HCT116 (cell line): ENCODE measurements at regions of chr1 and their contacts with region 1.

Region 1: GRCh38 chr1:152347116-152347728 is 12.6 kb downstream of the FLG2 start:
- DNase-seq: peak; percentile 61
- ATAC-seq: peak; percentile 81
- H3K4me3 ChIP-seq: no peak overlapping the region
- H3K27ac ChIP-seq: no peak overlapping the region
- H3K4me1 ChIP-seq: no peaks in the 10 kb centered on the region
- H3K27me3 ChIP-seq: peaks cover 23% of the 10 kb centered on the region
- CTCF ChIP-seq: peak; percentile 54 to 90 (median 81); a peak in 5 of 6 replicates
- POLR2A ChIP-seq: no peak
- RAD21 ChIP-seq: peak; percentile 57

Region 2: DNA sequence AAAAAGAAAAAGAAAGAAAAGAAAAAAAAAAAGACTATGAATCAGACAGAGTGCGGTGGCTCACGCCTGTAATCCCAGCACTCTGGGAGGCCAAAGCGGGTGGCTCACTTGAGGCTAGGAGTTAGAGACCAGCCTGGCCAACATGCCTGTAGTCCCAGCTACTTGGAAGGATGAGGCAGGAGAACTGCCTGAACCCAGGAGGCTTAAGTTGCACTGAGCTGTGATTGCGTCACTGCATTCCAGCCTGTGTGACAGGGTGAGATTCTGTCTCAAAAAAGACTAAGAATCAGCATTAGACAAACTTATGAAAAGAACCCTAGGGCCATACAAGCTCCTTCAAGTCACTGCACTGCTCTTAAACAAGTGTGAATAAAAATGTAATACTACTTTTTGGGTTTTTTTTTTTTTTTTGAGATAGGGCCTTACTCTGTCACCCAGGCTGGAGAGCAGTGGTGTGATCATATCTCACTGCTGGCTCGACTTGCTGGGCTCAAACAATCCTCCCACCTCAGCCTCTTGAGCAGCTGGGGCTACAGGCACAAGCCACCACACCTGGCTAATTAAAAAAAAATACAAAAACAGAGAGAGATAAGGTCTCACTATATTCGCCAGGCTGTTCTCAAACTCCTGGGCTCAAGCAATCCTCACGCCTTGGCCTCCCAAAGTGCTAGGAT is 930.9 kb before region 1 on chr1:
- CTCF ChIA-PET with region 1: no interaction called
- POLR2A ChIA-PET with region 1: no interaction called
- RAD21 ChIA-PET with region 1: no interaction called
- intact Hi-C with region 1: no loop called
- DNase-seq: no peak
- ATAC-seq: no peak
- H3K4me3 ChIP-seq: no peak overlapping the region
- H3K27ac ChIP-seq: no peak overlapping the region
- H3K4me1 ChIP-seq: no peaks in the 10 kb centered on the region
- H3K27me3 ChIP-seq: no peaks in the 10 kb centered on the region
- CTCF ChIP-seq: no peak
- POLR2A ChIP-seq: no peak
- RAD21 ChIP-seq: no peak

Region 3: DNA sequence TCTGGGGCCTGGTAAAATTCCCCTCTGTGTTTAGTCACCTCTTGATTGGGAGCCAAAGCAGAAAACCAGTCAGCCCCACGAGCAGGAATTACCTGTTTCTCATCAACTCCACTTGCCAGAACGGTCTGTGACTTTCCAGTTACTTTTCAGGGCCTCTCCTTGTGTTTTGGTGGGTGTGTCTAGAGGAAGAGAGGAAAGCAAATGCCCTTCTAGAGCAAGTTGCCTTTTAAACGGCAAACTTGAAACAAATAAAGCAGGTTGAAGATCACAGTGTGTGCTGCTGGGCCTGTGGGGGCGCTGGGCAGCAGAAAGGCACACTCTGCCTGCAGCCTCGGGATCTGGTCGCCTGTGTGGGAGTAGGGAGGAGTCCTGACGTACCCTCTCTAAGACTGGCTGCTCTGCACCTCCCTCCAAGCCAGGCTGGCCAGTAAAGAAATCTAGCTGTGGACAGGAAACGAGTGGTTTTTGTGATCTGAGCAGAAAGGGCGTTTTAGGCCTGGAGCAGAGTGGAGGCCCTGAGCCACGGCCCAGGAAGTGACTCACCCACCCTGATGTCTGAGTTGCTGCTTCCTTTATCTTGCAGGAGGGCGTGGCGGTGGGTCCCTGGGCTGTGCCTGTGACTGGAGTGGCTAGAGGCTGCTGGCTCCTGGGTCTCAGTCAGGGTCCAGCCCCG is 299.4 kb before region 1 on chr1:
- CTCF ChIA-PET with region 1: no interaction called
- POLR2A ChIA-PET with region 1: no interaction called
- RAD21 ChIA-PET with region 1: no interaction called
- intact Hi-C with region 1: loop called (anchors 2 kb)
- DNase-seq: peak; percentile 99
- ATAC-seq: peak; percentile 88
- H3K4me3 ChIP-seq: peak overlapping the region; percentile 45 to 48
- H3K27ac ChIP-seq: peak overlapping the region; percentile 98
- H3K4me1 ChIP-seq: peaks cover 29 to 61% of the 10 kb centered on the region in 2 experiments
- H3K27me3 ChIP-seq: no peaks in the 10 kb centered on the region
- CTCF ChIP-seq: peak; percentile 4 to 67 (median 55); a peak in 4 of 6 replicates
- POLR2A ChIP-seq: peak; percentile 86
- RAD21 ChIP-seq: peak; percentile 17; the same call in 1 of the 2 replicates

Region 4: GRCh38 chr1:152118915-152119314 is 228.3 kb before region 1 on chr1:
- CTCF ChIA-PET with region 1: no interaction called
- POLR2A ChIA-PET with region 1: no interaction called
- RAD21 ChIA-PET with region 1: no interaction called
- intact Hi-C with region 1: no loop called
- DNase-seq: no peak
- ATAC-seq: no peak
- H3K4me3 ChIP-seq: no peak overlapping the region
- H3K27ac ChIP-seq: no peak overlapping the region
- H3K4me1 ChIP-seq: no peaks in the 10 kb centered on the region
- H3K27me3 ChIP-seq: peaks cover 56% of the 10 kb centered on the region
- CTCF ChIP-seq: no peak
- POLR2A ChIP-seq: no peak
- RAD21 ChIP-seq: no peak

Region 5: DNA sequence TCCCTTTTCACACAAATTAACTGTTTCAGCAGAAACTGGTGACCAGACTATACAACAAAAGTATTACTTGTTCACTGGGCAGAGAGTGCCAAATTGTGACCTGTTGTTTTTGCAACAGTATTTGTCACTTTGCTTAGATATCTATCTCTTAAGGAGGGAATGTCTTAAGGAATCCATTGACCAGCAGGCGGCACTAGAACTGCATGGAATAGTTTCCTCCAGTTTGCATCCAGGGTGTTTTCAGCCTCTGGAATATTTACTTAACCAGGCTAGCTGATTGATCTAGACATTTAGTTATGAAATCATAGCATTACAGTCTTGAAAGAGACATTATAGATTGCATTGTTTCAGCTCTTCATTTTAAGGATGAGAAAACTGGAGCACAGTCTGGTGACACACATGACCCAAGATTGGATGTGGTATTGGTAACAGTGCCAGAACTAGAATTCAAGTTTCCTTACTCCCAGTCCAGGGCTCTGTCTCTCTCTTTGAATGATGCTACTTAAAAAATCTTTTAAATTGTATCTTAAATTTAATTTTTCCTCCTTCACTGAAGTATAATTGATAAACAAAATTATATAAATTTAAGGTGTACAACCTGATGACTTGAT is 205.1 kb before region 1 on chr1:
- CTCF ChIA-PET with region 1: no interaction called
- POLR2A ChIA-PET with region 1: no interaction called
- RAD21 ChIA-PET with region 1: no interaction called
- intact Hi-C with region 1: loop called (anchors 2 kb)
- DNase-seq: peak; percentile 63
- ATAC-seq: peak; percentile 91
- H3K4me3 ChIP-seq: no peak overlapping the region
- H3K27ac ChIP-seq: no peak overlapping the region
- H3K4me1 ChIP-seq: no peaks in the 10 kb centered on the region
- H3K27me3 ChIP-seq: peaks cover 26% of the 10 kb centered on the region
- CTCF ChIP-seq: peak; percentile 80 to 94 (median 93)
- POLR2A ChIP-seq: no peak
- RAD21 ChIP-seq: peak; percentile 97

Region 6: GRCh38 chr1:152167835-152168519 is 179.2 kb before region 1 on chr1:
- CTCF ChIA-PET with region 1: no interaction called
- POLR2A ChIA-PET with region 1: no interaction called
- RAD21 ChIA-PET with region 1: no interaction called
- intact Hi-C with region 1: no loop called
- DNase-seq: peak; percentile 78
- ATAC-seq: peak; percentile 89
- H3K4me3 ChIP-seq: no peak overlapping the region; a peak in 1 of 4 replicates
- H3K27ac ChIP-seq: no peak overlapping the region
- H3K4me1 ChIP-seq: peaks cover 22 to 37% of the 10 kb centered on the region in 2 experiments
- H3K27me3 ChIP-seq: peaks cover 4% of the 10 kb centered on the region; the same call in 1 of the 2 replicates
- CTCF ChIP-seq: no peak
- POLR2A ChIP-seq: no peak
- RAD21 ChIP-seq: no peak

Region 7: DNA sequence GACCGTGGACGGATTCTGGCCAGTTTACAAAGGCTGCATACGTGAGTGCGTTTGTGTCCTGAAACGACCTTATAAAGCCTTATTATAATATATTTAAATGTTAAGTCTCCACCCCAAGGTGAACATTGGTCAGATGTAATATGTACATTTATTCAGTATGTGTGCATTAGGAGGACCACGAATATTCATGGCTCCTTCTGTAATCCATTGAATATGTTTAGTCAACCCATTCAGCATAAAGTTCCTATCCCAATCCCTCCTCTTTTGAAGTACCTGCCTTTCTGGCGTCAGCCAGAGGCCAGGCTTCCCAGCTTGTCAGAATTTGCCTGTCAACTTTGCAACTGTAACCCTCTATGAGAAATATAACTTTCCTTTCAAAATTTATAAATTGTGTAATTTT is 11.8 kb before region 1 on chr1:
- CTCF ChIA-PET with region 1: interaction called, 10 read pairs
- POLR2A ChIA-PET with region 1: no interaction called
- RAD21 ChIA-PET with region 1: no interaction called
- intact Hi-C with region 1: no loop called
- DNase-seq: no peak
- ATAC-seq: no peak
- H3K4me3 ChIP-seq: no peak overlapping the region
- H3K27ac ChIP-seq: no peak overlapping the region
- H3K4me1 ChIP-seq: no peaks in the 10 kb centered on the region
- H3K27me3 ChIP-seq: peaks cover 32% of the 10 kb centered on the region
- CTCF ChIP-seq: no peak
- POLR2A ChIP-seq: no peak
- RAD21 ChIP-seq: no peak

Region 8: GRCh38 chr1:152398812-152399698 is 51.8 kb after region 1 on chr1:
- CTCF ChIA-PET with region 1: interaction called, 20 read pairs
- POLR2A ChIA-PET with region 1: no interaction called
- RAD21 ChIA-PET with region 1: no interaction called
- intact Hi-C with region 1: no loop called
- DNase-seq: peak; percentile 63
- ATAC-seq: peak; percentile 95
- H3K4me3 ChIP-seq: no peak overlapping the region
- H3K27ac ChIP-seq: no peak overlapping the region
- H3K4me1 ChIP-seq: peaks cover 3 to 7% of the 10 kb centered on the region in 2 experiments; a peak in 2 of 4 replicates
- H3K27me3 ChIP-seq: peaks cover 25% of the 10 kb centered on the region
- CTCF ChIP-seq: peak; percentile 80 to 97 (median 81)
- POLR2A ChIP-seq: no peak
- RAD21 ChIP-seq: peak; percentile 65

Region 9: DNA sequence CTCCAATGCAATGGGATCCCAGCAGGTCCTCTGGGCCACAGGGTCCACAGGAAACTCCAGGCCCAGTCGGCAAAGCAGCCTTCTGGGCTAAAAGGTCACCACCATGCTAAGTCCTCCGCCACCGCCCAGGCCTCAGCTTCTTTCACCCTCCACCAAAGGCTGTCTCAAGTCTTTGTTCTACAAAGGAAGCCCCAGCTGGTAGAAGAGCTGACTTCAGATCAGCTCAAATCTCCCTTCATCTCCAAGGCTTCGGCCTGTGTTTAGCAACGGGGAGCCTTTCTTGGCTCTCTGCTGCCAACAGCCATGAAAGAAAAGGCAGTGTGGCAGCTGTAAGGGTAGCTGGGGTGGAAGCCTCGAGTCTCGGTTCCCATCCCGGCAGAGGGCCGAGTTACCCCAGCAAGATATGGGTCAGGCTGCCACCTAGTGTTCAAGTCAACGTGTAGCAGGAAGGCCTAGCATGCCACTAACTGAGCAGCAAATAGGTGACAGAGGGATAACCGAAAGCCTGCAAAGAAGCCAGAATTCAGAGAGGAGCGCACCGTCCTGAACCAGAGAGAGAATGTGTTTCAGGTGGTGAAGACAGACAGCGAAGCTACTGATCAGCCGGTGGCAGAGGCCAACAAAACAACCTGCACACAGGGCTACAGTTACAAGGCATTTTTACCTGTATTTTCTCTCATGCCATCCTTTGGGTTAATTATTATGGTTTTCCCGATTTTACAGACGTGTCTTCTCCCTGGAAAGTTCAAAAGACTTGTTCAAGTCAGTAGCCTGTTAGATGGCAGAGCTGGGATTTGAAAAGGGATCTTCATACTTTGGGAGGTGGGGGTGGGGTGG is 93.6 kb after region 1 on chr1:
- CTCF ChIA-PET with region 1: interaction called, 13 read pairs
- POLR2A ChIA-PET with region 1: no interaction called
- RAD21 ChIA-PET with region 1: no interaction called
- intact Hi-C with region 1: no loop called
- DNase-seq: peak; percentile 63
- ATAC-seq: peak; percentile 99
- H3K4me3 ChIP-seq: no peak overlapping the region
- H3K27ac ChIP-seq: no peak overlapping the region
- H3K4me1 ChIP-seq: peaks cover 0 to 14% of the 10 kb centered on the region in 2 experiments; a peak in 2 of 4 replicates
- H3K27me3 ChIP-seq: peaks cover 6% of the 10 kb centered on the region; the same call in 1 of the 2 replicates
- CTCF ChIP-seq: peak; percentile 85 to 93 (median 92)
- POLR2A ChIP-seq: no peak
- RAD21 ChIP-seq: peak; percentile 83

Region 10: DNA sequence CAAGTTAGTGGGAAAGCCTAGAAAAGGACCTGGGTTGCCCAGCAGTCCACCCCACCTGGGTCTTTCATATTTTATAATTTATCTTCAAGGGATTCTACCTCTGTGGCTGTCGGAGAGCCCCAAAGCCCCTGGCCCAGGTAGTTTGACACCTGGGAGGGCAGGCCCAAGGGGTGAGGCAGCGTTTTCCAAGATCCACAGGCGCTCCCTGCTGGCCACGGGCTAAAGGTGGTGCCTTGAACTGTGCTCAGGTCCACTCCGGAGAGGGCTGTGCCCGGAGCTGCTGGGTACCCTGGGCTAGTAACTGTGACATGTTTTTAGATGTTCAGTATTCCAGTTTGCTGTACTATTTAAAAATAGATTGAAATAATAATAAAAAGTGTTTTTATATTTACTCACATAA is 104.0 kb after region 1 on chr1:
- CTCF ChIA-PET with region 1: no interaction called
- POLR2A ChIA-PET with region 1: no interaction called
- RAD21 ChIA-PET with region 1: no interaction called
- intact Hi-C with region 1: loop called (anchors 5 kb)
- DNase-seq: no peak
- ATAC-seq: peak; percentile 99
- H3K4me3 ChIP-seq: no peak overlapping the region
- H3K27ac ChIP-seq: no peak overlapping the region
- H3K4me1 ChIP-seq: no peaks in the 10 kb centered on the region
- H3K27me3 ChIP-seq: no peaks in the 10 kb centered on the region
- CTCF ChIP-seq: peak; percentile 50 to 69 (median 60); a peak in 5 of 6 replicates
- POLR2A ChIP-seq: no peak
- RAD21 ChIP-seq: peak; percentile 51

Region 11: GRCh38 chr1:152515434-152515783 is 168.2 kb after region 1 on chr1:
- CTCF ChIA-PET with region 1: no interaction called
- POLR2A ChIA-PET with region 1: no interaction called
- RAD21 ChIA-PET with region 1: no interaction called
- intact Hi-C with region 1: no loop called
- DNase-seq: no peak
- ATAC-seq: no peak
- H3K4me3 ChIP-seq: no peak overlapping the region
- H3K27ac ChIP-seq: no peak overlapping the region
- H3K4me1 ChIP-seq: peaks cover 0 to 15% of the 10 kb centered on the region in 2 experiments; a peak in 2 of 4 replicates
- H3K27me3 ChIP-seq: peaks cover 6% of the 10 kb centered on the region; the same call in 1 of the 2 replicates
- CTCF ChIP-seq: no peak
- POLR2A ChIP-seq: no peak
- RAD21 ChIP-seq: no peak